WTC11 (cell line): ENCODE measurements at regions of chr10 and their contacts with region 1.

Region 1: GRCh38 chr10:20858292-20859124 is 38.6 kb downstream of the NEBL start:
- DNase-seq: no peak
- ATAC-seq: no peak
- H3K4me3 Mint-ChIP-seq: no peak overlapping the region
- H3K27ac Mint-ChIP-seq: no peak overlapping the region
- H3K4me1 Mint-ChIP-seq: 0 out of 2 replicates have a peak, but pooled peaks cover under 1% of the 10 kb centered on the region
- H3K27me3 Mint-ChIP-seq: no peaks in the 10 kb centered on the region
- CTCF ChIP-seq: 0 out of 2 replicates have a peak, but pooled peaks have one; percentile 24

Region 2: GRCh38 chr10:19412531-19412930 is 1446.0 kb before region 1 on chr10:
- CTCF ChIA-PET with region 1: interaction called, 10 read pairs
- POLR2A ChIA-PET with region 1: no interaction called
- DNase-seq: no peak
- ATAC-seq: peak; percentile 44; the same call in 1 of the 2 replicates
- H3K4me3 Mint-ChIP-seq: no peak overlapping the region
- H3K27ac Mint-ChIP-seq: no peak overlapping the region
- H3K4me1 Mint-ChIP-seq: peaks cover 20% of the 10 kb centered on the region
- H3K27me3 Mint-ChIP-seq: peaks cover 71% of the 10 kb centered on the region
- CTCF ChIP-seq: peak; percentile 52

Region 3: GRCh38 chr10:20877986-20878983 is 19.8 kb after region 1 on chr10:
- CTCF ChIA-PET with region 1: no interaction called
- POLR2A ChIA-PET with region 1: no interaction called
- DNase-seq: no peak
- ATAC-seq: no peak
- H3K4me3 Mint-ChIP-seq: no peak overlapping the region
- H3K27ac Mint-ChIP-seq: no peak overlapping the region
- H3K4me1 Mint-ChIP-seq: no peaks in the 10 kb centered on the region
- H3K27me3 Mint-ChIP-seq: 0 out of 2 replicates have a peak, but pooled peaks cover under 1% of the 10 kb centered on the region
- CTCF ChIP-seq: no peak